ENCODE measurements at regions of chr20 and their contacts with region 1.

Region 1: GRCh38 chr20:22466447-22467171 is 117.8 kb downstream of the FOXA2 start:
- DNase-seq: no peak
- H3K4me3 ChIP-seq: no peak overlapping the region
- H3K27ac ChIP-seq: no peak overlapping the region
- H3K4me1 ChIP-seq: peaks cover 10% of the 10 kb centered on the region
- H3K27me3 ChIP-seq: no peaks in the 10 kb centered on the region
- CTCF ChIP-seq: no peak

Region 2: DNA sequence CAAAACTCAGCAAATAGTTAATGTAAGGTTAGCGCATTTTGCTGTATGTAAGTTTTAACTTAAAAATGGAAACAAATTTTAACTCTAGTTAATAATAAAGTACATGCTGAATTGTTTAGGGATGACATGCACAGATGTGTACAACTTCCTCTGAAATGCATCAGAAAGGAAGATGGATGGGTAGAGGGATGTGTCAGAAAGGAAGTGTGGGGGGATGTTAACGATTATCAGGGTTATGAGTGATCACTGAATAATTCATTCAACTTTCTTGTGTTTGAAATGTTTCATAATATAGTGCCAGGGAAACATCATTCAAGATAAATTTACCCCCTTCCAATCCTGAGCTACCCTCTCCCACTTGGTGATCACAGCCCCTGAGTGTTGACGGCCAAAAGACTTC is 30.2 kb after region 1 on chr20:
- CTCF ChIA-PET with region 1: no interaction called
- dilution Hi-C with region 1: no loop called
- in situ Hi-C with region 1: no loop called
- intact Hi-C with region 1: no loop called
- DNase-seq: no peak
- H3K4me3 ChIP-seq: no peak overlapping the region
- H3K27ac ChIP-seq: no peak overlapping the region
- H3K4me1 ChIP-seq: no peaks in the 10 kb centered on the region
- H3K27me3 ChIP-seq: no peaks in the 10 kb centered on the region
- CTCF ChIP-seq: no peak

Region 3: GRCh38 chr20:22511943-22512910 is 45.6 kb after region 1 on chr20:
- CTCF ChIA-PET with region 1: no interaction called
- dilution Hi-C with region 1: loop called (anchors 5 kb)
- in situ Hi-C with region 1: no loop called
- intact Hi-C with region 1: no loop called
- DNase-seq: no peak
- H3K4me3 ChIP-seq: no peak overlapping the region
- H3K27ac ChIP-seq: no peak overlapping the region
- H3K4me1 ChIP-seq: no peaks in the 10 kb centered on the region
- H3K27me3 ChIP-seq: no peaks in the 10 kb centered on the region
- CTCF ChIP-seq: no peak

Measured in mammary epithelial cell (primary cell).